ENCODE measurements at regions of chr1 and their contacts with region 1.

Region 1: DNA sequence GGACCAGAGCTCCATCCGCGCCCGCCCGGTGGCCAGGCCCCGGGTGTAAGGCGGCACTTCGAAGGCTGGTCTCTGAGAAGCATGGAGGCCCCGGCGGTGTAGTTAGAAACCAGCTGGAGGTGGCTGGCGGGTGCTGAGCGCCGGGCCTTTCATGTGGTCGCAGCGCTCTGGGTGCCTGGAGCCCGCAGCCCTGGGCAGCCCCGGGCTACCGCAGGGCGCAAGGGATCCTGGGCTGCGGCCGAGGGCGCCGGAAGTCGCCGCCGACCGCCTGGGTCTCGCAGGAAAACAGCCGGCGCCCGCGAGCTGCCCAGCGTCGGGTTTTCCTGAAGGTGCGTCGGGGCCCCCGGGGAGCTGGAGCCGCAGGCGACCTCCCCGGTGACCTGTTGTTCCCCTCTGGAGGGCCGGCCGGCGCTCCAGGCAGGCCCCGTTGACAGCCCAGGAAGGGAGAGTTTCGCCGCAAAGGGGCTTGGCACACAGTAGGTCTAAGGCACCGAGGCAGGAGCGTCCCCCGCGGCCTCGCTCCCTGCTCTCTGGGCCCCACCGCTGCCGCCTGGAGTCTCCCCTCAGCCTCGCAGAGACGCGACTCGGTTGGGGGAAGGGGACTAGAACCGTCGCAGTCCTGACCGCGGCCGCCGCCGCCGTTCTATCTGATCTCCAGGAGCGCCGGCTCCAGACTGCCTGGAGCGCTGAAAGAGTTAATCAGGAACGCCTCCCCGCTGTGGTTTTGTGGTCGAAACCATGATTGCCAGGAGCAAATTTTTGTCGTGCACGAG is 2.7 kb downstream of the GRHL3 start:
- DNase-seq: peak; percentile 93
- H3K4me3 Mint-ChIP-seq: peak overlapping the region; percentile 82
- H3K27ac Mint-ChIP-seq: peak overlapping the region; percentile 82
- H3K4me1 Mint-ChIP-seq: peaks cover 35% of the 10 kb centered on the region
- H3K27me3 Mint-ChIP-seq: peaks cover 90% of the 10 kb centered on the region

Region 2: DNA sequence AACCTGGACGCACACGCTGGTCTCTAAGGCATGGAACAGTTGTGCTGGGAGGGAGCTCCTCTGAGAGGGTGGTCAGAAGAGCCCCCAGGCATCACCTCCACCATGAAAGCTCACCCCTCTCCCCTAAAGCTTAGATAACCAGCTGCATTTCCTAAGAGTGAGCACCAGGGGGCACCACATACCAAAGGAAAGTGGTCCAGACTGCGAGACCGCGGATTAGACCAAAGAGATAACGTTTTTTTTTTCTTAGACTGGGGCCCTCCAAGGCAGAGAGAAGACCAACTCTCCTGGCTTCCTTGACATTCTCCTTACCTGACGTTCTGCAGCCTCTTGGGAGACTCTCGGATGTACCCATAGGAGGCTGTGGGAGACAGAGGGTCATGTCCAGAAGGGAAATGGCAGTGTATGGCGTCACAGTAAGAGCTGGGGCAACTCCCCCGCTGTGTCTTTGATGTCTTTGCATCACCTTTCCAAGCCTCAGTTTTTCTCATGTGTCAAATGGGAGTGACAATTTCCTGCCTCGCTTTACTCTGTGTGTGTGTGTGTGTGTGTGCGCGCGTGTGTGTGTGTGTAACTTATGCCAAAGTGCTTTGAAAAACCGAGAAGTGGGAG is 122.5 kb before region 1 on chr1:
- intact Hi-C with region 1: loop called (anchors 1 kb)
- DNase-seq: peak; percentile 92
- H3K4me3 Mint-ChIP-seq: peak overlapping the region; percentile 51
- H3K27ac Mint-ChIP-seq: no peak overlapping the region
- H3K4me1 Mint-ChIP-seq: peaks cover 31% of the 10 kb centered on the region
- H3K27me3 Mint-ChIP-seq: peaks cover 3% of the 10 kb centered on the region

Region 3: DNA sequence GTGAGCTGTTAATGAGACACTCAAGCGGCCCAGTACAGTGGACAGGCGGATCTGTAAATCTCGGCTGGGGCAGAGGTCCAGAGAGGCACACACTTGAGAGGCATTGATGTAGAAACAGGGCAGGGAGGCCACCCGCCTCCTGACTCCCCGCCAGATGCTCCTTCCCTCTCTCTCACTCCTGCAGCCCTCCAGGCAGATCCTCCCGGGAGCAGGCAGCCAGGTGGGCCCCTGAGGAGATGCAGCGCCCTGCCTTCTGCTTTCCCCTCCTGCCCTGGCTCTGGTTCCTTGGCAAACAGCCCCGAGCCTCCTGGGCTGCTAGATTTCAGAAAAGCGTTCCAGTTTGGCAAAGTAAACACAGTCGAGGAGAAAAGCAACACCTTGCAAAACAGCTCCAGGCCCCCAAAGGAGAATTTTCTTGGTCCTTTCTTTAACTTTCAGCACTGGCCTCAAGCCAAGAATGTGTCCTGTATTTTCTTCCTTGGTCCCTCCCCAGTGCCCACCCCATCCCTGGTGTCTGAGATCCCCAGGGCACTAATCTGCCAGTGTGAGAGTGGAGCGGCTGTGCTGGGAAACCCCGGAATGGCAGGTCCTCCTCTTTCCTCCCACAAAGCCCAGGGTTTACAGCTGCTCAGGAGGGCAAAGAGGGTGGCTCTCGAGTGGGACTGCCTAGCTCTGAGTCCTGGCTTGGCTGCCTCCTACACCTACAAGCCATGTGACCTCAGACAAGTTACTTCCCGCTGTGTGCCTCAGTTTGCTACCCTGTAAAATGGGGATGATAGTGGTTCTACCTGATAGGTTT is 105.4 kb before region 1 on chr1:
- intact Hi-C with region 1: no loop called
- DNase-seq: no peak
- H3K4me3 Mint-ChIP-seq: no peak overlapping the region
- H3K27ac Mint-ChIP-seq: no peak overlapping the region
- H3K4me1 Mint-ChIP-seq: no peaks in the 10 kb centered on the region
- H3K27me3 Mint-ChIP-seq: peaks cover 56% of the 10 kb centered on the region

Region 4: GRCh38 chr1:24277420-24278169 is 44.3 kb before region 1 on chr1:
- intact Hi-C with region 1: loop called (anchors 5 kb)
- DNase-seq: peak; percentile 64
- H3K4me3 Mint-ChIP-seq: no peak overlapping the region
- H3K27ac Mint-ChIP-seq: no peak overlapping the region
- H3K4me1 Mint-ChIP-seq: peaks cover 9% of the 10 kb centered on the region
- H3K27me3 Mint-ChIP-seq: peaks cover 28% of the 10 kb centered on the region

Region 5: DNA sequence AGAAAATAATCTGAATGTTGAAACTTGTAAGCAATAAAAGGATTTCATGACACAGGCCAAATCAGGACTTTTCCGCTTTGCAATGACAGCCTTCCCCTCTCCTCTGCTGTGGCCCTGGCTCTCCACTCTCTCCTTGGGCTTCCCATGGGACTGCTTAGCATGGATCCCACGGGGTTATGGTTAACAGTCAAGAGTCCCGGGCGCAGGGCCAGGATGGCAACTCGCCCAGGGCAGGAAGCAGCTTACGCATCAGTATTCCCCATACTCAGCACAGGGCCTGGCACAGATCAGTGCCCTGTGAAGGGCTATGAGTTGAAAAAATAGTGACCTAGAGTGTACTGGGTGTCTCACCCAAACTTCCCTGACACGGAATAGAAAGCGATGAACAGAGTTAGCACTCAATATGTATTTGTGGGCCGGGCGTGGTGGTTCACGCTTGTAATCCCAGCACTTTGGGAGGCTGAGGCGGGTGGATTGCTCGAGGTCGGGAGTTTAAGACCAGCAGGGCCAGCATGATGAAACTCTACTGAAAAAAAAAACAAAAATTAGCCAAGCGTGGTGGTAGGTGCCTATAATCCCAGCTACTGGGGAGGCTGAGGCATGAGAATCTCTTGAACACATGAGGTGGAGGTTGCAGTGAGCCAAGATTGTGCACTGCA is 31.8 kb before region 1 on chr1:
- intact Hi-C with region 1: no loop called
- DNase-seq: no peak
- H3K4me3 Mint-ChIP-seq: no peak overlapping the region
- H3K27ac Mint-ChIP-seq: no peak overlapping the region
- H3K4me1 Mint-ChIP-seq: no peaks in the 10 kb centered on the region
- H3K27me3 Mint-ChIP-seq: peaks cover 12% of the 10 kb centered on the region

Region 6: GRCh38 chr1:24351918-24352627 is 30.2 kb after region 1 on chr1:
- intact Hi-C with region 1: loop called (anchors 2 kb)
- DNase-seq: peak; percentile 71
- H3K4me3 Mint-ChIP-seq: peak overlapping the region; percentile 22
- H3K27ac Mint-ChIP-seq: peak overlapping the region; percentile 73
- H3K4me1 Mint-ChIP-seq: peaks cover 37% of the 10 kb centered on the region
- H3K27me3 Mint-ChIP-seq: no peaks in the 10 kb centered on the region

Region 7: DNA sequence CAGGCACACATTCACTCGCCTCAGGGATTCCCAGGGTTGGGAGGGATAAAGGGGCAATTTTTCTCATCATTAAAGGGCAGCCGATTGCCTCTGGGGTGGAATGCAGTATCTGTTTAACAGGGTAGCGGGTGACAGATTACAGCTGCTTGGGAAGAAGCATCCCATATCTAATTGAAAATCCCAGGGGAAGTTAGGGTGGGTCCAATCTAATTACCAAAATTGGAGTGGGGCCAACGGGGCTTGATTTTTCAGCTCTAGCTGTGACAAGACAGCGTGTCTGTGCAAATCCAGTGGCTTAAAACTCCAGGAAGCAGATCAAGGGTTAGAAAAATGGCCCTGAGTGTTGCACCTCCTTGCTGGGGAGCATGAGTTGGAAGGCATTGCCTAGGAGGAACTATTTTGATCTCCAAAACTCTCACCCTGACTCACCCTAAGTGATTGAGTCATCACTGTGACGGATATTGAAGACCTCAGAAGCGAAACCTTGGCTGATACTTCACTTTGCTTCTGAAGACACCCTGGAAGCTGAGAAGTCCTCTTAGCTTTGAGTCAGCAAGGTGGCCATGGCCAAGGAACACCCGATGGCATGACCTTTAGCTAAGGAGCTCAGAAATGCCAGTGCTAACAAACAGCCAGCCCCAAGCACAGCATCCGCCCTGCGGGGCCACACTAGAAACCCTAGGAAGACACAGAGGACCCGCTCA is 43.2 kb after region 1 on chr1:
- intact Hi-C with region 1: loop called (anchors 1 kb)
- DNase-seq: peak; percentile 81
- H3K4me3 Mint-ChIP-seq: no peak overlapping the region
- H3K27ac Mint-ChIP-seq: peak overlapping the region; percentile 83
- H3K4me1 Mint-ChIP-seq: peaks cover 27% of the 10 kb centered on the region
- H3K27me3 Mint-ChIP-seq: peaks cover 5% of the 10 kb centered on the region

Region 8: DNA sequence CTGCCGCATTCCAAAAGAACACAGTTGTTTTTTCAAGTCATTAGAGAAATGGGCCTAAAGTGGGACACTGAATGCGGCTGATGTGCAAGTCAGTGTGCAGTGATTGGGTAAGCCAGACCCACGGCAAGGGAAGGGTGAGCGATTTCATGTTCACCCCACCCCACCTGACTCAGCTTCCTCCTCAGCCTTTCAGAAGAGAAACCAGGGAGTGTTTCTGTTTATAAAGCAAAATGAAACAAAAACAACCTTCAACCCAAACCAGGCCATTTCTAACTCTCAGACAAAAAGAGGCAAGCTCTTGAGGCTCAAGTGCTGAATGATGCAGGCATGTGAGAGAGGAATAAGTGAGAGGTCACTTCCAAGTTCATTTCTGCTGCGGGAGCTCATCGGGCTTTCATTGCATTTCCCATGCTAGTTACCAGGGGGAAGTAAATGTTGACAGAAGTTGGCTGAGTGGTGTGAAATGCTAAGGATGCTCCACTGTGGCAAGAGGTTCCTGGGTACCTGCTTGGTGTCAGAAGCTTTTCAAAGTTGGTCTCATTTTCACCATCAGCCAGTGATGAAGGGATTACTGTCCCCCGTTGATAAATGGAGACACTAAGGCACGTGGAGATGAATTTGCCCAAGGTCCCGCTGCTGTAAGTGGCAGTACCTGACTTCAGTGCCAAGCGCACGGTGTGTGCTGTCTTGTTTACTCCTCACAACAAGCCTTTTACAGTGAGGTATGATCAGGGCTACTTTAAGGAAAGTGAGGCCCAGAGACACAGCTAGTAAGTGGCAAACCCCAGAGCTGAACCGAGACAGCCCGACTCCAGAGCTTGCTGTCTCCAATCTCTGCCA is 62.6 kb after region 1 on chr1:
- intact Hi-C with region 1: loop called (anchors 1 kb)
- DNase-seq: peak; percentile 83
- H3K4me3 Mint-ChIP-seq: peak overlapping the region; percentile 65
- H3K27ac Mint-ChIP-seq: peak overlapping the region; percentile 79
- H3K4me1 Mint-ChIP-seq: peaks cover 31% of the 10 kb centered on the region
- H3K27me3 Mint-ChIP-seq: no peaks in the 10 kb centered on the region

Region 9: GRCh38 chr1:24506691-24507381 is 185.0 kb after region 1 on chr1:
- intact Hi-C with region 1: no loop called
- DNase-seq: peak; percentile 72
- H3K4me3 Mint-ChIP-seq: peak overlapping the region; percentile 74
- H3K27ac Mint-ChIP-seq: peak overlapping the region; percentile 88
- H3K4me1 Mint-ChIP-seq: peaks cover 69% of the 10 kb centered on the region
- H3K27me3 Mint-ChIP-seq: no peaks in the 10 kb centered on the region